Psoas muscle (tissue), 8 donors: ENCODE measurements at regions of chr22 and their contacts with region 1.

Region 1: DNA sequence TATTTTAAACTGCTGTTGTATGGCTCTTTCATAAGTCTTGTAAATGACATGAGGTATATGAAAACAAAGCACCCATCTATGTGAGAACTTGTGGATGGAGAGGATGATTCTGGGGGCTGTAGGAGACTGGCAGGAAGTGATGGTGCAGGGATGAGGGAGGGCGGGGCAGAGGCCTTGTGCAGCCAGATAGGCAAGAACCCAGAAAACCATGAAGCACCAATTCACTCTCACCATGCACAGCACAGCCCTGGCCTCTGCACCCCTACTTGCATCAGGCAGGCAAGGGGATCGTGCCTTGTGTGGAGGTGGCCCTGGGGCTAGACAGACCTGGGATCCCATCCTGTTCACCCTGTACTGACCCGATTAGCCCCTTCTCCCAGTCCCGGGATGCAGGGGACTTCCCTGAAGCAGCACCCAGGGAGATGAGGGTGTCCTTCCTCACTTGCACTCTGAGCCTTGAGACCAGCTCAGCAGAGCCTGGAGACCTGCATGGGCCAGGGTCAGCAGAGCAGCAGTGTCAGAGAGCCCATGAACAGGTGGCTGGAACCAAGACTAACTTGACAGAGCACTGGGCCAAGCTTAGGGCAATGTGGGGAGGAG is 85.5 kb downstream of the MORC2 start:
- DNase-seq: no peak
- ATAC-seq: no peak
- H3K4me3 ChIP-seq: no peak overlapping the region
- H3K27ac ChIP-seq: no peak overlapping the region
- H3K4me1 ChIP-seq: no peaks in the 10 kb centered on the region
- H3K27me3 ChIP-seq: no peaks in the 10 kb centered on the region
- CTCF ChIP-seq: no peak

Region 2: GRCh38 chr22:30864441-30865420 is 18.3 kb before region 1 on chr22:
- intact Hi-C with region 1: loop called in 1 of 2 experiments (anchors 1 kb)
- DNase-seq: no peak
- ATAC-seq: no peak
- H3K4me3 ChIP-seq: no peak overlapping the region
- H3K27ac ChIP-seq: no peak overlapping the region
- H3K4me1 ChIP-seq: no peaks in the 10 kb centered on the region
- H3K27me3 ChIP-seq: no peaks in the 10 kb centered on the region
- CTCF ChIP-seq: no peak